Endothelial cell of umbilical vein (primary cell): ENCODE measurements at regions of chr4 and their contacts with region 1.

Region 1: DNA sequence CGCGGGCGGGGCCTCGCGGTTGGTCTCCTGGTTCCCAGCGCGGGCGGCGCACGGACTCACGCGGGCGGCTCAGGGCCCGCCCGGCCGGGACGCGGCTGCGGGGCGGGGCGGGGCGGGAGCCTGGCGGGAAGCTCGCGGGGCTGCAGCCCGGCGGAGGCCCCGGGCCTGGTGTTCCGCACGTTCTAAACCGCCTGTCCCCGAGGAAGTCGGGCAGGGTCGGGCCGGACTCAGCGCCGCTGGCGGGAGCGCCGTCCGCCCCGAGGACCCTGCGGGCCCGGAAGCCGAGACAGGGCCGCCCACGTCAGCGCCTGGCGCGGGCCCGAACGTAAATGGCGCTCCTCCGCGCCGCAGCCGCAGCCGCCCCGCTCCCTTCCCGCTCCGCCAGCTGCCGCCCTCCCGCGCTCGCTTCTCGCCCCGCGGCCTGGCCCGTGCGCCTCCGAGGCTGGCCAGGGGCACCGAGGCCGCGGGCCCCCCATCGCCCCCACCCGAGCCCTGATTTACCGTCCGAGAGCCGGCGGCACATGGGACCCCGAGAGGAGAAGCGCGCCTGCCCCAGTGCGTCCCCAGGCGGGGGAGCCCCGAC is 309 bp upstream of the CTBP1 start:
- DNase-seq: peak; percentile 75
- H3K4me3 ChIP-seq: peak overlapping the region; percentile 56 to 63 (median 58)
- H3K27ac ChIP-seq: peak overlapping the region; percentile 77
- H3K4me1 ChIP-seq: peaks cover 18% of the 10 kb centered on the region
- H3K27me3 ChIP-seq: no peaks in the 10 kb centered on the region
- CTCF ChIP-seq: no peak
- POLR2A ChIP-seq: peak; percentile 62

Region 2: DNA sequence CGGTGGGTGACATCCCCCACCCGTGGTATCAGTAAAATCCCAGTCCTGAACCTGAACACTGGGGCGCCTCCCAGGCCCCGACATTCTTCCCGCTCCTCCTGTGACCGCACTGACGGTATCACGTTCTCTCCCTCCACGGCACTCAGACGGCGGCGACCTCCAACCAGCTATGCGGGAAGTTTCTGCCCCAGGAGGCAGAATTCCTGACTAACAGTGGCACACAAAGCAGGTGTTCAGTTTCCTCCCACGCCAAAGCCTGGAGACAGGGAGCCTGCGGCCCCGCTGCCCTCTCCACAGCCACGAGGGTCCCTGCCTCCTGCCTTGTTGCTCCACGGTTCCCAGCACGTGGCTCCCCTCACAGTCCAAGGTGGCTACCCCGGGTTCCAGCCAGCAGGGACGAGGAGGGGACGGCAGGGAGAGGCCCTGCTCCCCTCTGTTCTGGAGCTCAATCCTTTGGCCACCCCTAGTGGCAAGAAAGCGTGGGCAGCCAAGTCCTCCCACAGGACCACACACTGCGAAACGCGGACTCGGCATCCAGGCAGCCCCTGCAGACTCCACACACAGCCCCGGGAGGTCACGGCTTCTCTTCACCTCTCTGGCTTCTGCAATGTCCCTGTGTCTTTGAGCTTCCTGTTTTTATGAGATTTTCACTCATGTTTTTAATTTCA is 15.5 kb before region 1 on chr4:
- CTCF ChIA-PET with region 1: interaction called, 5 read pairs
- POLR2A ChIA-PET with region 1: interaction called, 5 read pairs
- dilution Hi-C with region 1: no loop called
- intact Hi-C with region 1: loop called (anchors 1 kb)
- DNase-seq: peak; percentile 30
- H3K4me3 ChIP-seq: no peak overlapping the region
- H3K27ac ChIP-seq: peak overlapping the region; percentile 84
- H3K4me1 ChIP-seq: peaks cover 22% of the 10 kb centered on the region
- H3K27me3 ChIP-seq: no peaks in the 10 kb centered on the region
- CTCF ChIP-seq: peak; percentile 23 to 63
- POLR2A ChIP-seq: no peak

Region 3: DNA sequence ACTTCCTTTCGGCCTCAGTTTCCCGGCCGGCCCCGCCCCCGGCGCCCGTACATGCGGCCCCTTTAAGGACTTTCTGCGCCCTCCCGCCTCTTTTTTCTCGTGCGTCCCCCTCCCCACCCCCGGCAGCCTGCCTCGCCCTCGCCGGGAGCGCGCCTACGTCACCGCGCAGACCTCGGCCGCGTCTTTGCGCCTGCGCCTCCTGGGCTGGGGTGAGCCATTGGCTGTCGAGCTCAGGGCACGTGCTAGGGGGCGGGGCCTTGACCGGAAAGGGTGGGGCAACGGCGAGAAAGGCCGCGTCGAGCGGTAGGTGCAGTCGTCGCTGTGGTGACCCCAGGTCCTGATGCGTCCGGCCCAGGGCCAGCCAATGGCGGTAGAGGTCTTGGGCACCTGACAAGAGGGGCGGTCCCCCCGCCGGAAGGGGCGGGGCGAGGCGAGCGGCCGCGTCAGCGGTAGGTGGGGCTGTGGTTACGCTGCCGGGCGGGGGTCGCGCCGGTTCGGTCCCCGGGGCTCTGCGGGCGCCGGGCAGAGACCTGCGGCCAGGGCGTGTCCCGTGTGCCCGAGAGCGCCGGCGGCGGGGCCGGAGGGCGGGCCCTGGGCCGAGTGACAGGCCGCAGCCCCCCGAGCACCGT is 97.7 kb after region 1 on chr4 and contains the start of gene UVSSA:
- CTCF ChIA-PET with region 1: interaction called, 6 read pairs
- POLR2A ChIA-PET with region 1: interaction called, 5 read pairs
- dilution Hi-C with region 1: no loop called
- intact Hi-C with region 1: loop called (anchors 1 kb)
- DNase-seq: peak; percentile 100
- H3K4me3 ChIP-seq: peak within 1 kb of the TSS; percentile 69 to 76 (median 75)
- H3K27ac ChIP-seq: peak within 1 kb of the TSS; percentile 82
- H3K4me1 ChIP-seq: peaks cover 22% of the 10 kb centered on the region
- H3K27me3 ChIP-seq: no peaks in the 10 kb centered on the region
- CTCF ChIP-seq: no peak
- POLR2A ChIP-seq: no peak
- total RNA-seq, gene UVSSA: 14.9 and 16.4 TPM in 2 replicates